Testis (tissue), 5 donors: ENCODE measurements at regions of chr3 and their contacts with region 1.

Region 1: GRCh38 chr3:122858373-122858772 is 63.5 kb downstream of the SLC49A4 start:
- DNase-seq: no peak
- H3K4me3 ChIP-seq: no peak overlapping the region
- H3K27ac ChIP-seq: no peak overlapping the region
- H3K4me1 ChIP-seq: no peaks in the 10 kb centered on the region
- H3K27me3 ChIP-seq: no peaks in the 10 kb centered on the region
- CTCF ChIP-seq: peak in 2 of 3 experiments; percentile 20 to 28
- POLR2A ChIP-seq: no peak

Region 2: GRCh38 chr3:122739172-122739571 is 119.2 kb before region 1 on chr3:
- intact Hi-C with region 1: no loop called
- DNase-seq: no peak
- H3K4me3 ChIP-seq: no peak overlapping the region
- H3K27ac ChIP-seq: no peak overlapping the region
- H3K4me1 ChIP-seq: no peaks in the 10 kb centered on the region
- H3K27me3 ChIP-seq: no peaks in the 10 kb centered on the region
- CTCF ChIP-seq: no peak
- POLR2A ChIP-seq: no peak

Region 3: DNA sequence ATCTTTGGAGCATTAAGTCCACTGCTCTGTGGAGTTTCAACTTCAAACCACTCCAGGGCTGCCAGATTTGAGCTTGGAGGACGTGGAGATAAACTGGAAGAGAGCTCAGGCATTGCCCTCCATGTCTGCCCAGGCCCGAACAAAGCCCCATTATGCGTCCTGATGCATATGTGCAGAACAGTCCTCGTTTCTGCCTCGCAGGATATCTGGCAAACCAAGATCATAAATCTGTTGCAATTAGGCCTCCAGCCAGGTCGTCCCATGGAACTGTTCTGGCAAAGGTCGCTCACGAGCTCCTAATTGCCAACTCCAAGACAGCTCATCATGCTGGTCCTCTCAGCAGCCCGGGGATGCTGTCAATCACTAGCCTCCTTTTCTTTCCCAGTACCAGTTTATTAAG is 78.0 kb after region 1 on chr3:
- intact Hi-C with region 1: no loop called
- DNase-seq: peak; percentile 64
- H3K4me3 ChIP-seq: no peak overlapping the region
- H3K27ac ChIP-seq: peak overlapping the region; percentile 7 to 53
- H3K4me1 ChIP-seq: peaks cover 18% of the 10 kb centered on the region
- H3K27me3 ChIP-seq: no peaks in the 10 kb centered on the region
- CTCF ChIP-seq: no peak
- POLR2A ChIP-seq: no peak

Region 4: GRCh38 chr3:123258811-123259420 is 400.5 kb after region 1 on chr3:
- intact Hi-C with region 1: loop called (anchors 10 kb)
- DNase-seq: no peak
- H3K4me3 ChIP-seq: no peak overlapping the region
- H3K27ac ChIP-seq: no peak overlapping the region
- H3K4me1 ChIP-seq: no peaks in the 10 kb centered on the region
- H3K27me3 ChIP-seq: no peaks in the 10 kb centered on the region
- CTCF ChIP-seq: peak; percentile 57 to 76 (median 59)
- POLR2A ChIP-seq: no peak